PC-3 (cell line): ENCODE measurements at regions of chr11 and their contacts with region 1.

Region 1: DNA sequence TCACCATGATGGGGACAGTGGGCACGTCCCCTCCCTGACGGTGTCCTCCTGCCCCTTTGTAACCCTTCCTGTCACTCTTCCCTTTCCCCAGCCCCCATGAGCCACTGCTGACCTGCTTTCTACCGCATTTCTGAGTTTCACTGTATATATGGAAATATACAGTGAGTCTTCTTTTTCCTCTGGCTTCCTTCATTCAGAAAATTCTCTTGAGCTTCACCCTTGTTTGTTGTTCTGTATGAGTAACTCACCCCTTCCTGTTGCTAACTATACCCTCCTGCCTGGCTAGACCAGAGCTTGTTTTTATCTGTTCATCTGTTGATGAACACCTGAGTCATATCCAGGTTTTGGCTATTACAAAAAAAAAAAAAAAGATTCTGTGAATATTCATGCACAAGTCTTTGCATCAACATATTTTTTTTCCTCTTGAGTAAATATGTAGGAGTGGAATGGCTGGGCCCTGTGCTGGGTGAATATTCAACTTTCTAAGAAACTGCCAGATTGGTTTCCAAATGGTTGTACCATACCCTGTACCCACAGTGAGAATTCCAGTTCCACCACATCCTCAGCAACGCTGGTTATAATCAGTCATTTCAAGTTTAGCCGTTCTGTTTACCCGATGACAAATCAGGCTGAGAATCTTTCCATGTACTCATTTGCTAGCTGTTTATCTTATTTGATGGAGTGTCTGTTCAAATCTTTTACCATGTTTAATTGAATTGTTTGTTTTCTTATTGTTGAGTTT is 62.0 kb downstream of the IGF2 start:
- DNase-seq: peak; percentile 91
- ATAC-seq: peak; percentile 96
- H3K4me3 ChIP-seq: peak overlapping the region; percentile 50
- H3K27ac ChIP-seq: peak overlapping the region; percentile 97
- H3K4me1 ChIP-seq: peaks cover 27% of the 10 kb centered on the region
- H3K27me3 ChIP-seq: no peaks in the 10 kb centered on the region
- CTCF ChIP-seq: no peak

Region 2: DNA sequence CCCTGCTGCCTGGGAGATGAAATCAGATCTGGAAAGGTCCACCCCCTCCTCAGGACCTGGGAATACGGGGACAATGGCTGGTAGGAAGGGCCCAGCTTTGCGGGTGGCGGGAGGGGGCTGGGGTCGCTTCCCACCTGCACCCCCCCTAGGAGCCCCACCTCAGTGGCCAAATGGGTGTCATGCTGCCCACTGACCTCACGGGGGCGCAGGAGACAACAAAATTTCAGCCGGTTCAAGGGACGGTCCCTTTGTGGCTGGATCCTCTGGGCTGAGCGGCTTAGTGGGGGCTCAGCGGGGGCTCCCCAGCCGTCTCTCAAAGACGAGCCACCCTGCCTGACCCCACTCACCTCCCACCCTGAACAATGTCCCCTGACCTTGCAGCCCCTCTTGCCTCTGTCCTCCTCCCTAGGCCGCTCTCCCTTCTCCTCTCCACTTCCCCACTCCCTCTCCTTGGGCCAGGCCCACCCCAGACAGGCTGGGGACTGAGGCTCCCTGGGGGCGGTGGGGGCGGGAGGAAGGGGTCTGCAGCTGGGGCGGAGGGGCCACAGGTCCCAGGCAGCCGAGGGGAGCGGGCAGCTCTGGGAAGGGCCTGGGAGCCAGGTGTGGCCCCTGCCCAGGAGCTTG is 40.3 kb before region 1 on chr11:
- CTCF ChIA-PET with region 1: interaction called, 10 read pairs
- POLR2A ChIA-PET with region 1: no interaction called
- intact Hi-C with region 1: no loop called
- DNase-seq: no peak
- ATAC-seq: peak; percentile 59
- H3K4me3 ChIP-seq: no peak overlapping the region
- H3K27ac ChIP-seq: no peak overlapping the region
- H3K4me1 ChIP-seq: no peaks in the 10 kb centered on the region
- H3K27me3 ChIP-seq: no peaks in the 10 kb centered on the region
- CTCF ChIP-seq: no peak

Region 3: DNA sequence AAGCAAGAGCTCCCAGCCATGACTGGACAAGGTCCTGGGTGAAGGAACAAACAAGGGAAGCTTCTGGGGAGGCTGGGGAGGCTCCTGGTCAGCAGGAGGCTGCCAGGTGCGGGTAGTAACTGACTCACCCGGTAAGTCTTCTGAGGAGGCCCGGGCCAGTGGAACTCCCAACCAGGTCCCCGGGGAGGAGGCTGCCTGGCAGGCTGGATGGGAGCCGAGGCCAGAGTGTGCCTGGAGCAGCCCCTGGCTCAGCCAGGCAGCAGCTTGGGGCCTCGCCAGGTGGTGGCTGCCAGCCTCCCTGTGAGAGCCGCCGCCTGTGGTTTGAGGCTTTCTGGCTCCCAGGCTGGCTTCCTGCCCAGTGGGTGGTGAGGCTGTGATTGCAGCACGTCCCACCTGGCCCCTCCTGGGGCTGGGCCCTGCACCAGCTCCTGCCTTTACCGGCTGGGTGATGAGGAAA is 15.8 kb after region 1 on chr11:
- CTCF ChIA-PET with region 1: interaction called, 4 read pairs
- POLR2A ChIA-PET with region 1: interaction called, 5 read pairs
- intact Hi-C with region 1: loop called (anchors 2 kb)
- DNase-seq: peak; percentile 95
- ATAC-seq: peak; percentile 83
- H3K4me3 ChIP-seq: peak overlapping the region; percentile 35; the same call in 1 of the 2 replicates
- H3K27ac ChIP-seq: no peak overlapping the region
- H3K4me1 ChIP-seq: peaks cover 28% of the 10 kb centered on the region
- H3K27me3 ChIP-seq: no peaks in the 10 kb centered on the region
- CTCF ChIP-seq: no peak

Region 4: GRCh38 chr11:2143799-2144543 is 66.7 kb after region 1 on chr11:
- CTCF ChIA-PET with region 1: interaction called, 10 read pairs
- POLR2A ChIA-PET with region 1: no interaction called
- intact Hi-C with region 1: no loop called
- DNase-seq: peak; percentile 21
- ATAC-seq: no peak
- H3K4me3 ChIP-seq: peak overlapping the region; percentile 41
- H3K27ac ChIP-seq: no peak overlapping the region
- H3K4me1 ChIP-seq: peaks cover 14% of the 10 kb centered on the region
- H3K27me3 ChIP-seq: peaks cover 67% of the 10 kb centered on the region
- CTCF ChIP-seq: no peak; the same call in 1 of the 2 replicates

Region 5: GRCh38 chr11:2377511-2378443 is 300.5 kb after region 1 on chr11:
- CTCF ChIA-PET with region 1: interaction called, 13 read pairs
- POLR2A ChIA-PET with region 1: no interaction called
- intact Hi-C with region 1: no loop called
- DNase-seq: peak; percentile 46
- ATAC-seq: peak; percentile 56
- H3K4me3 ChIP-seq: peak overlapping the region; percentile 99
- H3K27ac ChIP-seq: no peak overlapping the region
- H3K4me1 ChIP-seq: no peaks in the 10 kb centered on the region
- H3K27me3 ChIP-seq: no peaks in the 10 kb centered on the region
- CTCF ChIP-seq: no peak